ENCODE measurements at regions of chr11 and their contacts with region 1.

Region 1: GRCh38 chr11:107446822-107447431 is 10.7 kb downstream of the CWF19L2 start:
- DNase-seq: no peak
- ATAC-seq: no peak
- H3K4me3 Mint-ChIP-seq: no peak overlapping the region
- H3K27ac Mint-ChIP-seq: no peak overlapping the region
- H3K4me1 Mint-ChIP-seq: peaks cover 6% of the 10 kb centered on the region
- H3K27me3 Mint-ChIP-seq: no peaks in the 10 kb centered on the region

Region 2: DNA sequence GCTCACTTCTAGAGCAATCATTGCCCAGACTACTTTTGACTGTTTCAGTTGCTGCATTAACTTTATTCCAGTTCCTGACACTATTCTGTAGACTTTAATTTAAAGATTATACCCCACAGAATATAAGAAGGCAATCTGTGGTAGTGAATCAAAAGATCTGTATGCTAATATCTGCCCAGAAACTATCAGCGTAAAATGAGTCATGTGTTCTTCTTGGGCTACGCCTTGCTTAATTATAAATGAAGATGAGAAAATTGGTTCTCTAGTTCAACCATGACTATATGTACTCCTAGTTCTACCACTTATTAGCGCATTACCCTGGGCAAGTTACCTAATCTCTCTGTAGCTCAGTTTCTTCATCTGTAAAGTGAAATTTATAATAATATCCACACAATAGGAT is 117.8 kb before region 1 on chr11:
- CTCF ChIA-PET with region 1: no interaction called
- POLR2A ChIA-PET with region 1: no interaction called
- DNase-seq: no peak
- ATAC-seq: no peak
- H3K4me3 Mint-ChIP-seq: no peak overlapping the region
- H3K27ac Mint-ChIP-seq: no peak overlapping the region
- H3K4me1 Mint-ChIP-seq: no peaks in the 10 kb centered on the region
- H3K27me3 Mint-ChIP-seq: no peaks in the 10 kb centered on the region

Region 3: DNA sequence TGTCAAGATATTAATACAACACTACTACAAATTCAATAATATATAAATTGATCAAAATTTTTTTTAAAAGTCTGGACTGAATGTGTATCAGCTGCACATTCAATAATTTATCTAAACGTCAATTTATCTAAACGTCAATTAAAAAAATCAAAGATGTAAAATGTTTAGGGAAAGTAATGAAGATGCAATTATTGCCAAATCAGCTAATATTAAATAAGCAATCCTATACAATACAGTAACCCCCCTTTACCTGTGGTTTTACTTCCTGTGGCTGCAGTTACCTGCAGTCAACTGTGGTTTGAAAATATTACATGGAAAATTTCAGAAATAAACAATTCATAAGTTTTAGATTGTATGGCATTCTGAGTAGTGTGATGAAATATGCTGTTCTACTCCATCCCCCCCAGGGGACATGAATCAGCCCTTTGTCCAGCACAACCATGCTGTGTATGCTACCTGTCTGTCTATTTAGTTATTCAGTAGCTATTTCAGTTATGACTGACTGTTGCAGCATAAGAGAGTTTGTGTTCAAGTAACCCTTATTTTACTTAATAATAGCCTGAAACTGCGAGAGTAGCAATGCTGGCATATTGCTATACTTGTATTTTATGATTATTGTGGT is 61.5 kb before region 1 on chr11:
- CTCF ChIA-PET with region 1: no interaction called
- POLR2A ChIA-PET with region 1: no interaction called
- DNase-seq: no peak
- ATAC-seq: no peak
- H3K4me3 Mint-ChIP-seq: no peak overlapping the region
- H3K27ac Mint-ChIP-seq: no peak overlapping the region
- H3K4me1 Mint-ChIP-seq: peaks cover 7% of the 10 kb centered on the region
- H3K27me3 Mint-ChIP-seq: no peaks in the 10 kb centered on the region

Region 4: DNA sequence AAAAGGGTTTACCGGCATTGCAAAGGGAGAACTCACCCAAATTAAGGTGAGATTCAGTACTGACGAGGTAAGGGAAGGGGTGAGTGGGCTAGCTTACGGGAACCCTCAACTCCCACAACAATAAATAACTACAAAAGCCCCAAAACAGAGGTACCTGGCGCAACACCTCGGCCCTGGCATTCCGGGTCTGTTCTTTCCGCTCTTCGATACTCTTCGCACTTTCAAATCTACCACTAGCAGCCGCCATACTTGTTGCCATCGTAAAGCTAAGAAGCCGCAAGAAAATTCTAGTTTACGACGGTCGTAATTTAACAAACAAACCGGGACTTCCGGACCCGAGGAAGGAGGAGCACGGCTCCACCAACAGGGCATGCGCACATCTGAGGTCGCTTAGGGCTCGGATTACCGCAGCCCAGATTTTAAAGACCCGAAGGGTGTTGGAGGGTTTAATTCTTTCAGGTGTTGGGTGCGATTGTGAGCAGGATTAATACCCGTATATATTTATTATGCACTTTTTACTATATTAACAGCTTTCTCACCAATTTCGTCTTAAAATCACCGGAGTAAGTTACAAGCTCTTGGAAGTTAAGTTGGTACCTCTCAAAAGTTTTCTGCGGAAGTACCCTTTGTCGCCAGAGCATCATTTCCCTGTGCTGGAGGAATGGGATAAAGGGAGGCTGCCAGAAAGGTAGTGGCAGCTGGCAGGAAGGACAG is 10.8 kb after region 1 on chr11 and contains the start of gene CWF19L2:
- CTCF ChIA-PET with region 1: no interaction called
- POLR2A ChIA-PET with region 1: interaction called, 10 read pairs
- DNase-seq: peak; percentile 93
- ATAC-seq: peak; percentile 98
- H3K4me3 Mint-ChIP-seq: peak within 1 kb of the TSS; percentile 85
- H3K27ac Mint-ChIP-seq: peak within 1 kb of the TSS; percentile 90
- H3K4me1 Mint-ChIP-seq: peaks cover 22% of the 10 kb centered on the region
- H3K27me3 Mint-ChIP-seq: peaks cover 2% of the 10 kb centered on the region
- total RNA-seq, gene CWF19L2: 15.5 TPM

Measured in activated CD8-positive, alpha-beta T cell treated with anti-CD3 and anti-CD28 coated beads, Interleukin-2, amount 10 ng/mL, durations not matched to agents 7 days and 5 days (primary cell).